T-cell (primary cell): ENCODE measurements at regions of chr2 and their contacts with region 1.

Region 1: DNA sequence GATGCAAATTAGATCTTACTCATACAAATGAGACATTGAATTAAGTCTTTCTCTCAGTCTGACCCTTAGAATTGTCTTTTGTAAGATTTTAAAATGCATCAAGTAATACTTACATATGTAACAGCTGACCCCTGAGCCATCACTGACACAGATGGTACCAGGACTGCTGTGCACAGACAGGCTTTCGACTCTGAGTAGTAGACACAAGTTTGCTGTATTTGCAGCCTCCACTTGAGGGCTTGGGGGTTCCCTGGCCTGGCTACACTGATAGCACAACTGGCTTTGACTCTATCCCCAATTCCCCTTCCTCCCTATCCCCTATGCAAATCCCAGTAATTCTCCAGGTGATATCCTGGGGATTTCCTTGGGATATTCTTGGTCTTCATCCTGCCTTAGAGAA is 200.7 kb downstream of the RPIA start:
- DNase-seq: no peak
- ATAC-seq: no peak
- H3K4me3 ChIP-seq: no peak overlapping the region
- H3K4me3 Mint-ChIP-seq: no peak overlapping the region
- H3K27ac ChIP-seq: no peak overlapping the region
- H3K27ac Mint-ChIP-seq: no peak overlapping the region
- H3K4me1 ChIP-seq: no peaks in the 10 kb centered on the region
- H3K4me1 Mint-ChIP-seq: no peaks in the 10 kb centered on the region
- H3K27me3 ChIP-seq: no peaks in the 10 kb centered on the region
- H3K27me3 Mint-ChIP-seq: peaks cover 2 to 8% of the 10 kb centered on the region in 2 donors

Region 2: GRCh38 chr2:88765154-88765900 is 126.9 kb before region 1 on chr2:
- CTCF ChIA-PET with region 1: no interaction called
- POLR2A ChIA-PET with region 1: no interaction called
- DNase-seq: peak in 28 of 35 experiments; percentile 2 to 58 (median 30)
- ATAC-seq: peak; percentile 78 to 91 (median 86)
- H3K4me3 ChIP-seq: peak overlapping the region; percentile 27 to 69
- H3K4me3 Mint-ChIP-seq: peak overlapping the region; percentile 72 to 89 (median 80)
- H3K27ac ChIP-seq: no peak overlapping the region
- H3K27ac Mint-ChIP-seq: peak overlapping the region; percentile 27 to 44
- H3K4me1 ChIP-seq: peaks cover 2 to 11% of the 10 kb centered on the region in 2 experiments
- H3K4me1 Mint-ChIP-seq: peaks cover 3 to 8% (median 5%) of the 10 kb centered on the region in 3 donors
- H3K27me3 ChIP-seq: peaks cover 0 to 19% of the 10 kb centered on the region in 2 experiments
- H3K27me3 Mint-ChIP-seq: peaks cover 4 to 21% of the 10 kb centered on the region in 2 donors

Region 3: DNA sequence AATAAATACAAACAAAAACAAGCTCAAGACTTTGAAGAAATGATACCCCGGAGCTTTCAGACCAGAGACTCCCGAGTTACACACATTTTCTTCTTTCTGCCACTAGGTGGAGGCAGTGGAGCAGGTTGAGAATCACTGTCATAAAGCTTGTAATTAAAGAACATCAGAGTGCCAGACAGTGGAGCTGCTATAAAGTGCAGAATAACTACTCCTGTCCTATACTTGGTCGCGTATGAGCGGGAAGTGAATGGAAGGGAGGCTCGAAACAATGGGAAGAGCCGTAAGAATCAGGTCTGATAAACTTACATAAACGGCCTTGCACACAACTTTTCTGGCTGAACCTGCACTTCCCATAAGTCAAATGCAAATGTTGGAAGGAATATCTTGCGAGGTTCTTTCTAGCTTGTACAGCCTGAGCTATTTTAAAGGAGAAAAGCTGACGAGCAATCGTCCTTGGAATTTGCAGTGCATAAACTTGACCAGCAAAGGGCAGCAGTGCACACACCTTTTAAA is 11.7 kb before region 1 on chr2:
- CTCF ChIA-PET with region 1: interaction called, 7 to 13 read pairs
- POLR2A ChIA-PET with region 1: no interaction called
- DNase-seq: peak in 16 of 35 experiments; percentile 2 to 67 (median 16)
- ATAC-seq: peak in 3 of 4 experiments; percentile 60 to 69 (median 66)
- H3K4me3 ChIP-seq: no peak overlapping the region
- H3K4me3 Mint-ChIP-seq: no peak overlapping the region
- H3K27ac ChIP-seq: no peak overlapping the region
- H3K27ac Mint-ChIP-seq: no peak overlapping the region
- H3K4me1 ChIP-seq: no peaks in the 10 kb centered on the region
- H3K4me1 Mint-ChIP-seq: no peaks in the 10 kb centered on the region
- H3K27me3 ChIP-seq: peaks cover 0 to 3% of the 10 kb centered on the region in 2 experiments
- H3K27me3 Mint-ChIP-seq: peaks cover 5 to 8% of the 10 kb centered on the region in 2 donors